ENCODE measurements at regions of chr9 and their contacts with region 1.

Region 1: DNA sequence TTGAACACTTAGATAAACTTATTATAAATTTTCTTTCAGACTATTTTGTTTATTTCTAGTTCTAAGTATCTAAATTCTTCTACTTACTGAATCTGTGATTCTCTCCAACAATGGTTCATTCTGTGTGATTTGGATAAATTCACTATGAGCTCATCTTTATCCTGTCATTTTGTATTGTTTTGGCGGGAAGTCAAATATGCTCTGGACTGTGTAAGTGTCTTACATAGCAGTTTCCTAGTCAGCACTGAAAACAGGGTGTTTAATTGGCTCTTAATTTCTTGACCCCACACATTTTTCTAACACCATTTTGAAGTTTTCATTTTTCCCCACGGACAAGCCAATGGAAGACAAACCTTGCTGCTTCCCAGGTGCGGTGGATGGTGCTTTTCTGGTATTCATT is 207.0 kb upstream of the ACO1 start:
- DNase-seq: no peak
- H3K4me3 ChIP-seq: no peak overlapping the region
- H3K27ac ChIP-seq: no peak overlapping the region
- H3K4me1 ChIP-seq: no peaks in the 10 kb centered on the region
- H3K27me3 ChIP-seq: no peaks in the 10 kb centered on the region
- CTCF ChIP-seq: no peak
- EP300 ChIP-seq: no peak
- POLR2A ChIP-seq: no peak

Region 2: DNA sequence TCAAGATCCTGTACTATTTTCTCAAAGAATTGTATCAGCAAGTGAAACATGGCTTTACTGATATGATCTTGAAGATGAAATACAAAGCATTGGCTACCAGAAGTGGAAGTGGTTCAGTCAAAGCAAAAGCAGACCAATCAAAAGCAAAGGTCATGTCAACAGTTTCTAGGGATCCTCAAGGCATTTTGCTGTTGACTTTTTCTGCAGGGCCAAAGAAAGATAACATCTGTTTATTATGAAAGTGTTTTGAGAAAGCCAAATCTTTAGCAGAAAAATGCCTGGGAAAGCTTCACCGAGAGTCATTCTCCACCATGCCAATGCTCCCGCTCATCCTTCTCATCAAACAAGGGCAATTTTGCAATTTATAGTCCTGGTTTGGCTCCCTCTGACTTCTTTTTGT is 116.7 kb after region 1 on chr9:
- in situ Hi-C with region 1: loop called in 1 of 4 experiments (anchors 25 kb)
- intact Hi-C with region 1: no loop called
- DNase-seq: no peak
- H3K4me3 ChIP-seq: no peak overlapping the region
- H3K27ac ChIP-seq: no peak overlapping the region
- H3K4me1 ChIP-seq: no peaks in the 10 kb centered on the region
- H3K27me3 ChIP-seq: no peaks in the 10 kb centered on the region
- CTCF ChIP-seq: no peak
- EP300 ChIP-seq: no peak
- POLR2A ChIP-seq: no peak